PC-3 (cell line): ENCODE measurements at regions of chr3 and their contacts with region 1.

Region 1: DNA sequence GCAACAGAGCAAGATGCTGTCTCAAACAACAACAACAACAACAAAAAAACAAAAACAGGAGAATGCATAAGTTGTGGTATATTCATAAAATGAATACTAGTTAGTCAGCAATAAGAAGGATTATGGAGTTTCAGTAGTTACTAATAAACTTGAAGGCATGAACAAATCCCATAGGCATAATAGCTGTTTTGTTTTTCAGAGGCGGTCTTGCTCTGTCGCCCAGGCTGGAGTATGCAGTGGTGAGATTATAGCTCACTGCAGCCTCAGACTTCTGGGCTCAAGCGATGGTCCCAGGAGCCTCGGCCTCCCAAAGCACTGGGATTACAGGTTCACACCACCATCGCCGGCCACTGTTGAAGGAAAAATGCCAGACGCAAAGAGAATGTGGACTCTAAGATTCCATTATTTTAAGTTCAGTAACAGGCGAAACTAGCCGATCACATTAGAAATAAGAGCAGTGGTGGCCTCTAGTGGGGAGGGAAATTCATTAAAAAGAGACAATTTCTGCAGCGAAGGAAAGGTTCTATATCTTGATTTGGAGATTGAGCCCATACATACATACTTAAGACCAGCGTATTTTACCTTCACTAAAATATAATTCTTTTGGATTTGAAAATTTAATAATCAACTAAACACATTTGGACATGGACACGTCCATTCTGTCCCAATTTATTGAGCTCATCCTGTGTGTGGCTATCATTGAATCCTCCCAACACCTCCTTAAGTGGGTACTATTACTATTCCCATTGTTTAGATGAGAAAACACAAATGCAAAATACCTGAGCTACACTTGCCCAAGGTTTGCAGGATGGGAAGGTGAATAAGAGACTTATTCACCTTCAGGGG is 27.4 kb upstream of the HDAC11 start:
- DNase-seq: peak; percentile 79
- ATAC-seq: peak; percentile 32
- H3K4me3 ChIP-seq: peak overlapping the region; percentile 62
- H3K27ac ChIP-seq: peak overlapping the region; percentile 58; the same call in 1 of the 2 replicates
- H3K4me1 ChIP-seq: peaks cover 8% of the 10 kb centered on the region; the same call in 1 of the 2 replicates
- H3K27me3 ChIP-seq: no peaks in the 10 kb centered on the region
- CTCF ChIP-seq: peak; percentile 84

Region 2: DNA sequence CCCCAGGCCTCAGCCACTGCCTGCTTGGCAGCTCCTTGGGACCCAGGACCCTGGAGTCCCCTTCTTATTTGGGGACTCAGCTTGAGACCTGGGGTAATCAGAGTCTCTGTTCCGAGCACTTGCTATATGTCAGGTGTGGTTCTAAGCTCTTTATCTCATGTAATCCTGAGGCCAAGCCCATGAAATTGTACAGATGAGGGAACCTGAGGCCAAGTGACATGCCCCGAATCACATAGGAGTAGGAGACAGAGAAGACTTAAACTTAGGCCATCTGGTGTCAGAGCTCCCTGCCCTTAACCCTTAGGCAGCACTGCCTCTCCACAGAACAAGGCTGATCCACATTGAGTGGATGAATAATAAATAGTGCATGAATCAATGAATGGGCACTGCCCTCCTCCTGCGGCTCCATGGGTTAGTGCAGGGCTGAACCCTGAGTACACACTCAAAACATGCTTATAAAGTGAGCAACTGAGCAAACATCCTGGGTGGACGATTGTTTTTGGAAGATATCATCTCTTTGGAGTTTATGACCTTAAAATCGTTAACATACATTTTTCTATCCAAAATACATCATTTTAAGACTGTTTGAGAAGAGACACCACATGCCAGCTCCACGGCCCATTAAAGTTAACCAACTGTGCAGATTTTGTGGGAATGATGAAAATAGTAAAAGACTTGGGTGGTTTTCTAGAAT is 346.3 kb before region 1 on chr3:
- CTCF ChIA-PET with region 1: interaction called, 3 read pairs
- POLR2A ChIA-PET with region 1: interaction called, 5 read pairs
- intact Hi-C with region 1: loop called (anchors 5 kb)
- DNase-seq: peak; percentile 98
- ATAC-seq: peak; percentile 71
- H3K4me3 ChIP-seq: no peak overlapping the region
- H3K27ac ChIP-seq: peak overlapping the region; percentile 99
- H3K4me1 ChIP-seq: peaks cover 66% of the 10 kb centered on the region
- H3K27me3 ChIP-seq: no peaks in the 10 kb centered on the region
- CTCF ChIP-seq: no peak

Region 3: DNA sequence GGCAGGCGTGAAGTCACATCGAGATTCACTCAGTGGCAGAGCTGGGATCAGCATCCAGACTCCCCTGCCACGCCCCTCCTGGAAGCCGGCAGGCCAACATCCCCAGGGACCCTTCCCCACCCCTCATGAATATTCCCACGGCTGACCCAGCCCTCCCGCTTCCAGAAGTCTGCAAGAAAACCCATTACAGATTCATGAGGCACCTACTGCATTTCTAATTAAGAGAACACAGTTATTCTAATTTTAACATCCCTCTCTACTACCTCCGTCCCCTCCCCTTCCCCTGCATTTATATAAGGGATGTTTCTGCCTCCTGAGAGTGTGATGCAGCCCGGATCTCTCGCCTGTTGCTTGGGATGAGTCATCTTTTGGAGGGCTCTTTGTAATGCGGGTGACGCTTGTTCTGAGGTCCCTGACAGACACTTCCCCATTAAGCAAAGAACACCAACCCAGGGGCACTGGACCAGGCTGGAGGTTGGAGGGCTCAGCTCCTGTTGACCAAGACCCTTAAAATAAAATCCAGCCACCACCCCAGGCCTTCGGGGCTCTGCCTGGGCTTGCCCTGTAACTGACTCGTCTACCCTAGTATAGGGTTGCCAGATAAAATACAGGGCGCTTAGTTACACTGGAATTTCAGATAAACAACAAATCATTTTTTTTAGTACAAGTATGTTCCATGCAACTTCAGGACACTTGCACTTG is 151.3 kb before region 1 on chr3:
- CTCF ChIA-PET with region 1: interaction called, 3 read pairs
- POLR2A ChIA-PET with region 1: no interaction called
- intact Hi-C with region 1: loop called (anchors 1 kb)
- DNase-seq: peak; percentile 82
- ATAC-seq: peak; percentile 91
- H3K4me3 ChIP-seq: no peak overlapping the region
- H3K27ac ChIP-seq: no peak overlapping the region
- H3K4me1 ChIP-seq: peaks cover 13% of the 10 kb centered on the region
- H3K27me3 ChIP-seq: no peaks in the 10 kb centered on the region
- CTCF ChIP-seq: no peak

Region 4: DNA sequence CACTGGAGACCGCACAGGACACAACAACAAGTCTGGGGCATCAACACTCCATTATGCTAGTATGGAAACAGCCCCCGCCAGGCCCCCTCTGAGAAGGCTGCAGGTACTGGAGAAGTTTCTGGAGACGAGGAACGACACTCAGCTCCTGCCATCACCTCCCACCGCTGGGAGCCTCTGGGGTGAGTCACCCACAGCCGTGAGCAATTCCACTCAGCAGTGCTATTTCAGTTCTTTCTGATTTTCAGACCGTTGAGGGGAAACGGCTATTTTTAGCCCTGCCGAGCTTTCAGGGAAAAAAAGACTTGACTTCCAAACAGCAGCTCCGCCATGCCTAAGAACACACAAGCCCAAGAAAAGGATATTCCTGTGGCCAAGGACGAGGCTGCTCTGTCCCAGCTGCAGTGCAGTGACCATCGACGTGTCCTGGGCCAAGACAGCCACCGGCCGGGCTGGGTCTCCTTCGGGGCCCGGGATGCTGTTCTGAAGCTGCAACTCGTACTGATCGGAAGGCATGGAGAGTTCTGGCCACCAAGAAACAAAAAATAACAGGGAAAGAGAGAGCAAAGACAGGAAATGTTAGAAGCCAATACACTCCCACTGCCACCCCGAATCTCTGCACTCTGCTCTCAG is 73.4 kb before region 1 on chr3:
- CTCF ChIA-PET with region 1: interaction called, 3 read pairs
- POLR2A ChIA-PET with region 1: no interaction called
- intact Hi-C with region 1: loop called (anchors 5 kb)
- DNase-seq: peak; percentile 37
- ATAC-seq: peak; percentile 82
- H3K4me3 ChIP-seq: no peak overlapping the region
- H3K27ac ChIP-seq: no peak overlapping the region
- H3K4me1 ChIP-seq: 0 out of 2 replicates have a peak, but pooled peaks cover 3% of the 10 kb centered on the region
- H3K27me3 ChIP-seq: no peaks in the 10 kb centered on the region
- CTCF ChIP-seq: no peak

Region 5: DNA sequence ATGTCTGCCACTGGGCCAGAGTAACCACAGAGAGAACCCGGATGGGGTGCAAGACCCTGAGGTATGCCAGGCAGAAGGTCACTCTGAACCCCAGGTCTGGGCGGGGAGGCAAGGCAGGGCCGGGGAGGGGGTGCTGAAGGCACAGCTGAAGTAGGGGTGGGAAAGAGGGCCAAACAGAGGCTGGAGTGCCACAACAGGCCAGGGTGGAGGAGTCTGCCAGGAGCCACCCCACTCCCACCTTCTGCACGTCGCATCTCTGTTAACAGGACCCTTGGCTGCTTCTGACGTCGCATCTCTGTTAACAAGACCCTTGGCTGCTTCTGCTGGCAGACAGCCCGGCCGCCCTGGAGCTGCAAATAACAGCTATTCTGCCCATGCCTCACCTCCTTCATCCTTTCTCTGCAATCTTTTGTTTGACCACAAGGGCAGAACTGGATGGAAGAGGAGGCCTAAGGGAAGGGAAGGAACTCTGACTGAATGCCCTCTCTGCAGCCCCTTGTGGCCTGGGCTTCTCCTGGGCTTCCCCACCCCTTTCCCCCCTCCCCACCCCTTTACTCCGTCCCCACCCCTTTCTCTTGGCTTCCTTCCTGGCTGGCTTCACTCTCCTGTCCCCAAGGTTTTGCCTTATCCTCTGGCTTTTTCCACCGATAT is 75.6 kb after region 1 on chr3:
- CTCF ChIA-PET with region 1: no interaction called
- POLR2A ChIA-PET with region 1: no interaction called
- intact Hi-C with region 1: no loop called
- DNase-seq: peak; percentile 62
- ATAC-seq: peak; percentile 90
- H3K4me3 ChIP-seq: no peak overlapping the region
- H3K27ac ChIP-seq: no peak overlapping the region
- H3K4me1 ChIP-seq: no peaks in the 10 kb centered on the region
- H3K27me3 ChIP-seq: no peaks in the 10 kb centered on the region
- CTCF ChIP-seq: peak; percentile 44

Region 6: GRCh38 chr3:13648060-13649001 is 195.6 kb after region 1 on chr3:
- CTCF ChIA-PET with region 1: no interaction called
- POLR2A ChIA-PET with region 1: interaction called, 26 read pairs
- intact Hi-C with region 1: no loop called
- DNase-seq: peak; percentile 94
- ATAC-seq: peak; percentile 77
- H3K4me3 ChIP-seq: peak overlapping the region; percentile 66
- H3K27ac ChIP-seq: peak overlapping the region; percentile 69
- H3K4me1 ChIP-seq: peaks cover 33% of the 10 kb centered on the region
- H3K27me3 ChIP-seq: no peaks in the 10 kb centered on the region
- CTCF ChIP-seq: peak; percentile 99